ENCODE measurements at regions of chr1 and their contacts with region 1.

Region 1: DNA sequence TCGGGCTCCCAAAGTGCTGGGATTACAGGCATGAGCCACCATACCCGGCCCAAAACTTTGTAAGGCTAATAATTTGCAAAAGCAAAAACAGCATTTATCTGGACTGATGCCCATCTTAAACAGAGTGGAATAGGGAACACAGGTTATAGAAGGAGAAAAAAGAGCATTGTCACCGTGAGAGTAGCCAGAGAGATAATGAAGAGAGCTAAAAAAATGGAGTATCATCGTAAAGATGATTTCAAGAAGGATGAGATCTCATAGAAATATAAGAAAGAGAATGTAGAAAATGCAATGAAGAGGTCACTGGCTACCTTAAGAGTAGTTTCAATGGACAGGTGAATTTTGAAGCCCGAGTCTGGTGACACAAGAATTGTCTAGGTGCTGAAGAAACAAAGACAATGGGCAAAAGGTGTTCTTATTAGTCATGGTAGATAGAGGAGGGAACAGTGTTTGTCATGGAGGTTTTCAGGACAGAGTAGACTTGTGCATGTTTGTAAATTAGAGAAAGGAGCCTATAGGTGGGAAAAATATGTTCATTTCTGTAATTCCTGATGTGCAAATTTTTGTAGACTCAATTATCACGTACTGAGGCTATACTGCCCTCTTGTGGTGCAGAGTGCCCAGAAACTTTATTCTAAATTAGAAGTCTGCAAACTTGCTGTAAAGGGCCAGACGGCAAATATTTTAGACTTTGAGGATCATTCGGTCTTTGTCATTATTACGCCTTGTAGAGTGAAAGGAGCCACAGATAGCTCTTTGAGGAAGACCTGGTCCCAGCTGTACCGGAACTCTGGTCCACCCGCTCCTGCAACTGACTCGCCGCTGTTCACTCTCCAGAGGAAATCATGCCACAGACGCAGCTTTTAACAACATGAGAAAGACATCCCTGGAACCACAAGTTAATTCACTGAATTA is 8.1 kb upstream of the TMEM183A start:
- DNase-seq: peak; percentile 80
- ATAC-seq: peak; percentile 66
- H3K4me3 Mint-ChIP-seq: peak overlapping the region; percentile 50
- H3K27ac Mint-ChIP-seq: peak overlapping the region; percentile 23
- H3K4me1 Mint-ChIP-seq: peaks cover 10% of the 10 kb centered on the region
- H3K27me3 Mint-ChIP-seq: peaks cover 20% of the 10 kb centered on the region

Region 2: DNA sequence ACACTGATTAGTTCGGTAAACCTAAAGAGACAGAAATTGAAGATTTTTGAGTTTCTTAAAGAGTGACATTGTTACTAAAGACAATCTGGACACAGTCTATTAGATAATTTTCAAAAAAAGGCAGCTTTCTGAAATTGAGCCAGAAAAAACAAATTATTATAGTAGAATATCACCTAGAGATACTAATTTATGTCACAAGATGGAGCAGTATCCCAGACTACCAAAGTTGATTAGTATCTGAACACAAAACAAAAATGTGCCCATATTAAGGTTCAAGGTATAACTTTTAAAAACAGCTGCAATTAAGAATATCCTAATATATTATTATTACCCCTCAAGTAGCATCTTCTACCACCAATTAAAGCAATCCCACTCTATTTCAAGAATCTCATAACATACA is 248.3 kb before region 1 on chr1:
- CTCF ChIA-PET with region 1: interaction called, 16 read pairs
- POLR2A ChIA-PET with region 1: no interaction called
- intact Hi-C with region 1: loop called (anchors 2 to 5 kb)
- DNase-seq: no peak
- ATAC-seq: no peak
- H3K4me3 Mint-ChIP-seq: no peak overlapping the region
- H3K27ac Mint-ChIP-seq: no peak overlapping the region
- H3K4me1 Mint-ChIP-seq: no peaks in the 10 kb centered on the region
- H3K27me3 Mint-ChIP-seq: no peaks in the 10 kb centered on the region

Region 3: DNA sequence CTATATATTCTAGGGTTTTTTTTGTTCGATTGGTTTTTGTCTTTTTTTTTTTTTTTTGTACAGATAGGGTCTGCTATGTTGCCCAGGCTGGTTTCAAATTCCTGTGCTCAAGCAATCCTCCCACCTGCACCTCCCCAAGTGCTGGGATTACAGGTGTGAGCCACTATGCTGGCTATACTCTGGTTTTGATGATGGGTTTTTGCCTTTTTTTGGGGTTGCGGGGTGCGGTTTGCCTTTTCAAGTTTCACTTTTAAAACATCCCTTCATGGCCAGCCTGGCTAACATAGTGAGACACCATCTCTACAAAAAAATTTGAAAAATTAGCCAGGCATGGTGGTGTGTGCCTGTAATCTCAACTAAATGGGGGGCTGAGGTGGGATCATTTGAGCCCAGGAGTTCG is 200.8 kb before region 1 on chr1:
- CTCF ChIA-PET with region 1: no interaction called
- POLR2A ChIA-PET with region 1: interaction called, 11 read pairs
- intact Hi-C with region 1: no loop called
- DNase-seq: peak; percentile 24
- ATAC-seq: peak; percentile 47
- H3K4me3 Mint-ChIP-seq: no peak overlapping the region
- H3K27ac Mint-ChIP-seq: no peak overlapping the region
- H3K4me1 Mint-ChIP-seq: peaks cover 46% of the 10 kb centered on the region
- H3K27me3 Mint-ChIP-seq: no peaks in the 10 kb centered on the region

Region 4: GRCh38 chr1:202888531-202889360 is 110.3 kb before region 1 on chr1 and contains the start of gene RABIF:
- CTCF ChIA-PET with region 1: interaction called, 6 read pairs
- POLR2A ChIA-PET with region 1: no interaction called
- intact Hi-C with region 1: loop called (anchors 2 to 5 kb)
- DNase-seq: peak; percentile 98
- ATAC-seq: peak; percentile 94
- H3K4me3 Mint-ChIP-seq: peak within 1 kb of the TSS; percentile 91
- H3K27ac Mint-ChIP-seq: peak within 1 kb of the TSS; percentile 96
- H3K4me1 Mint-ChIP-seq: peaks cover 15% of the 10 kb centered on the region
- H3K27me3 Mint-ChIP-seq: no peaks in the 10 kb centered on the region
- total RNA-seq, gene RABIF: 6.8 to 7.4 TPM

Region 5: DNA sequence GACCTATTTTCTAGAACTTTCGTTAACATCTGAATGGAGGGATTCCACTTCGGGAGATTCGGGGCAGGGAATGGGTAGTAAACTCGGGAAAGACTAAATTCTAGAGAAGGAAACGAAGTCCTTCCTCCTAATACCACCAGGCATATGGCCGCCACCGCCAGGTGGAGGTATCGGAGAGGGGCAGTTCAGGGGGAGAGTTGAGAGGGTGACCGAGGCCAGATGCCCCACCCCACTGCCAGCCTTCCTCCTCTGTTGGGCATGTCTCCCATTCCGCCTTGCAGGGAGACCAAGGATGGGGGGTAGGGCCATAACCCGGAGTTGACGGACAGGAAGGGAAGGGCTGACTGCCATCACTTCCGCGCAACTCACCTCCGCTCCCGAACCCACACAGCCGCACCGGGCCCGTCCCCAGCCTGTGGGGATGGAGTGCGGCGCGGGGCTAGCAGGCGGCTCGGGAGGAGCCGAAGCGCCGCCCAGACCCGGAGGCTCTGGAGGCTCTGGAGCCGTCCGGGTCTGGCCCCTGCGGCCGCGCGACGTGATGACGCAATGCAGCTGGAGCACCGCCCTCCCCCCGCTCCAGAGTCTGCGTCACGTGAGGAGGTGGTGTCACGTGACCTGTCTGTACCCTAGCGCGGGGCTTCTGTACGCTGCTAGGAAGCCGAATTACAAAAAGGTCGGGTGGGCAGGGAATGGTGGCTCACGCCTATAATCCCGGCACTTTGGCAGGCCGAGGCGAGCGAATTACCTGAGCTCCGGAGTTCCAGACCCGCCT is 72.2 kb before region 1 on chr1 and contains the start of gene KLHL12:
- CTCF ChIA-PET with region 1: interaction called, 6 read pairs
- POLR2A ChIA-PET with region 1: interaction called, 4 read pairs
- intact Hi-C with region 1: loop called (anchors 1 kb)
- DNase-seq: peak; percentile 98
- ATAC-seq: peak; percentile 96
- H3K4me3 Mint-ChIP-seq: peak within 1 kb of the TSS; percentile 86
- H3K27ac Mint-ChIP-seq: peak within 1 kb of the TSS; percentile 85
- H3K4me1 Mint-ChIP-seq: peaks cover 24% of the 10 kb centered on the region
- H3K27me3 Mint-ChIP-seq: no peaks in the 10 kb centered on the region
- total RNA-seq, gene KLHL12: 32.1 to 39.1 TPM

Region 6: GRCh38 chr1:202952818-202953217 is 46.3 kb before region 1 on chr1:
- CTCF ChIA-PET with region 1: interaction called, 12 read pairs
- POLR2A ChIA-PET with region 1: no interaction called
- intact Hi-C with region 1: no loop called
- DNase-seq: no peak
- ATAC-seq: peak; percentile 88
- H3K4me3 Mint-ChIP-seq: no peak overlapping the region
- H3K27ac Mint-ChIP-seq: peak overlapping the region; percentile 45
- H3K4me1 Mint-ChIP-seq: peaks cover 55% of the 10 kb centered on the region
- H3K27me3 Mint-ChIP-seq: no peaks in the 10 kb centered on the region

Region 7: GRCh38 chr1:202974856-202975255 is 24.2 kb before region 1 on chr1:
- CTCF ChIA-PET with region 1: interaction called, 19 read pairs
- POLR2A ChIA-PET with region 1: no interaction called
- intact Hi-C with region 1: no loop called
- DNase-seq: no peak
- ATAC-seq: no peak
- H3K4me3 Mint-ChIP-seq: no peak overlapping the region
- H3K27ac Mint-ChIP-seq: no peak overlapping the region
- H3K4me1 Mint-ChIP-seq: no peaks in the 10 kb centered on the region
- H3K27me3 Mint-ChIP-seq: peaks cover 12% of the 10 kb centered on the region